Activated CD4-positive, alpha-beta memory T cell treated with anti-CD3 and anti-CD28 coated beads for 36 hours (primary cell): ENCODE measurements at regions of chr12 and their contacts with region 1.

Region 1: DNA sequence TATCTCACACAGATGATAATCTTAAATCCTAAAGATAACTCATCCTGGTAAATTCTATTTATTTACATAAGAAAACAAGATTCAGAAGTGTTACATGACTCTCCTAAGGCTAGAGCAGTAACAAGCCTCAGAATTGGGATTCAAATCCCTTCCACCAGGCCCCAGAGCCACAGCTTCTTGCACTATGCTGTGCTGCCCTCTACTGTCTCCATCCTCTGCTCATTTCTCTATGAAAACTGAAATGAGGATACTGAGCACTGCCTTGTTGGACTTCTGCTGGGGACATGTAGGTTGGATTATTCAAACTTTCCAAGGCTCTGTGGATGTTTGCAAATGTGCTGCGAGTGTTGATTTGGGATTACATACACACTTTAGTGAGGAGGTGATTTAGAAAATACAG is 23.5 kb upstream of the C12orf50 start:
- DNase-seq: peak; percentile 29
- H3K4me3 Mint-ChIP-seq: no peak overlapping the region
- H3K27ac Mint-ChIP-seq: no peak overlapping the region
- H3K4me1 Mint-ChIP-seq: no peaks in the 10 kb centered on the region
- H3K27me3 Mint-ChIP-seq: no peaks in the 10 kb centered on the region

Region 2: DNA sequence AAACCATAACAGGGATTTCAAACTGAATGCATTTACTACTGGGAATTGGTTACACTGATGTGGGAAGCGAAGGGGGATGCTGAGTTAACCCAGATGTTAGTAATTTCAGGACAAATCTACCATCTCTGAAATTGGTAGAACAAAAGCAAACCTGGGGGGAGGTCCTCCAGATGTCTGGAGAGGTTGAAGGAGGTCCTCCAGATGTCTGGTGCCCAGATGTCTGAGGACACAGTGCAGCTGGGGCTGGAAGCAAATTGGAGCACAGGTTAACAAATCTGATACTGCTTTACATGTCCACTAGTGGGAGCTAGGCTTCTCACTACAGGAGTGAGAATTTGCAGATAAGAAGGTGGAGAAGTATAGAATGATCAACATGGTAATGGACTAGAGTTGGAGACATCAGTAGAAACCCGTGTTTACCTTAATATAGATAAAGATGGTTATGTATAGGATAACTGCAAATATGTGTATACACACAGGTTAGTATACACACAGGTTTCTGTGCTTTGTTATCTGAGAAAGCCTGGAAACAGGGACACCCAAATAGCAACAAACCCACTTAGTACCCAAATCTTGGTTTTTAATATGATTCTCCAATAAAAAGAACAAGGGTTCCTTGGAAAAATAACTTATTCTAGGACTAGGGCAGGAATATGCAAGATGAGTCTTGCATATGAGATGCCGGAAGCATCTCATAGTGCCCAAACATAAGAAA is 186.0 kb before region 1 on chr12:
- CTCF ChIA-PET with region 1: no interaction called
- POLR2A ChIA-PET with region 1: no interaction called
- intact Hi-C with region 1: loop called (anchors 10 kb)
- DNase-seq: no peak
- H3K4me3 Mint-ChIP-seq: no peak overlapping the region
- H3K27ac Mint-ChIP-seq: no peak overlapping the region
- H3K4me1 Mint-ChIP-seq: no peaks in the 10 kb centered on the region
- H3K27me3 Mint-ChIP-seq: peaks cover 4% of the 10 kb centered on the region